ENCODE measurements at regions of chr22 and their contacts with region 1.

Region 1: GRCh38 chr22:45863981-45864751 is 112.8 kb downstream of the WNT7B start:
- DNase-seq: peak; percentile 75
- ATAC-seq: peak; percentile 63 to 71

Region 2: DNA sequence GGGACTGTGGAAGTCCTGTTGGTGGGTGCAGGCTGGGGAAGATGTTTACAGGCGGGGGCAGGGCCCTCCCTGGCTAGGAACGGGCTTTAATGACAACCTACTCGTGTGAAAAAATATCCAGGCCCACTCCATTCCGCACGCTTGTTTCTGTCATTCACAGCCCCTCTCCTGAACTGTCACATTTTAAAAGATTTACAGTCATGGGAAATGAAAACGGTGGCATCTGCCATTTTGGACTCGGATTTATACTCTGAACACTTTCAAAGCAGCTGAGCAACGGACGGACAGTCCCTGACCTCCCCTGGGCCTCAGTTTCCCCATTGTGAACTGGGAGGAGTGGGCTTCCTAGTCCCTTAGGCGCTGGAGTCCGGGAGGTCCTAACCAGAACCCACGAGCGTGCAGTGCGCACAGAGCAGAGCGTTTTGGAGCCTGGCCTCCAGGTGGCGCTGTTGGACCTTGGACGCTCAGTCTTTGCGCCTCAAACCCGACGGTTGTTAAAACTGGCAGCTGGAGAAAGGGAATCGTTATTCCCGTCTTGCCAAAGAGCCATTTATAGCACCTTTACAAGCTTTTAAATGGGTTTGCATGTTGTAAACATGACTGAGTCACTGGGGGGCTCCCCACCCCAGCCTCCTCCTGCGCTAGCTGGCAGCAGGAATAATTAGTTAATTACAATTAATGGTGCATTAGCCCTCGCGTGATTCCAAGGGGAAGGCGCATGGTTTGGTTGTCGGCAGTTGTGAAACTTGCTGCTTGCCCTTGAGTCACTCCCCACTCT is 286.2 kb before region 1 on chr22:
- intact Hi-C with region 1: loop called (anchors 5 to 10 kb)
- DNase-seq: peak; percentile 85
- ATAC-seq: peak; percentile 71 to 87

Region 3: GRCh38 chr22:45645526-45646414 is 218.4 kb before region 1 on chr22:
- intact Hi-C with region 1: loop called (anchors 5 to 10 kb)
- DNase-seq: peak; percentile 72
- ATAC-seq: peak; percentile 95 to 96

Region 4: GRCh38 chr22:45975164-45976161 is 111.3 kb after region 1 on chr22:
- intact Hi-C with region 1: loop called in 1 of 2 experiments (anchors 2 kb)
- DNase-seq: no peak
- ATAC-seq: no peak

Region 5: DNA sequence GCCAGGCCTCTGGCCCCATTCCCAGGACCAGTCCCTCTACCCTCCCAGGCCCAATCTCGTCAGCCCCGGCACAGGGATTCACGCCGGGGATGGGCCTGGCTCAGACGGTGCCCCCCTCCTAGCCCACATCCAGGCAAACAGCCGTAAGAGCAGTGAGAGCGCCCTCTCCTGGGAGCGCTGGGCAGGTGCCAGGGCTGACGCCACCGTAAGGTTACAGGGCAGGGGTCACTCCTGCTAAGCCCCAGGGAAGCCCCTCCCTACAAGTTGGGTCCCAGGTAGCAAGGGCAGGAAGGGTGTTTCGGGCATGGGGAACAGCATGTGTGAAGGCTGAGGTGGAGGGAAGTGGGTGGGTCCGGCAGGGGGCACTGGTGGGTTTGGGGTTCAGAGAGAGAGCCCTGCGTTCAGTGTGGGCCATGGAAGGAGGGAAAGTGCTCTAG is 267.0 kb after region 1 on chr22:
- intact Hi-C with region 1: no loop called
- DNase-seq: no peak
- ATAC-seq: no peak